Activated CD4-positive, alpha-beta memory T cell treated with anti-CD3 and anti-CD28 coated beads, Interleukin-2, amount 10 ng/mL, durations not matched to agents 7 days and 5 days (primary cell): ENCODE measurements at regions of chr5 and their contacts with region 1.

Region 1: GRCh38 chr5:172984243-172984953 is 827 bp downstream of the ATP6V0E1 start:
- DNase-seq: peak; percentile 81
- H3K4me3 Mint-ChIP-seq: peak overlapping the region; percentile 96
- H3K27ac Mint-ChIP-seq: peak overlapping the region; percentile 97
- H3K4me1 Mint-ChIP-seq: peaks cover 33% of the 10 kb centered on the region
- H3K27me3 Mint-ChIP-seq: no peaks in the 10 kb centered on the region

Region 2: DNA sequence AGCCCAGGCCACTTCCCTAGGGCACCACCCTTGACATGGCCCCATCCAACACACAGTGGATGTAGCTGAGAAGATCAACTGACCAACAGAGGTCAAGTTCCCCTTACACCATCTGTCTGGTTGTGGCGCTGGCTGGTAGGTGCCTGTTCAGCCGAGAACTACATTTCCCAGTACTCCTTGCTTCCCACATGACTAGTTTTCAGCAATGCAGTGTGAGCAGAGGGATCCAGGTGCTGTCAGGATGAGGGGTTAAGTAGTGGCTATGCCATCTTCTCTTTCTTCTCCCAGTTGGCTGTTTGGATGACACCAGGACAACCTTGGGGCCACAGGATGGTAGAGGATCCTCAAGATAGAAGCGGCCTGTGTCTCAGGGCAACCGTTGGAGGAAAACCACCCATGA is 481.4 kb before region 1 on chr5:
- CTCF ChIA-PET with region 1: no interaction called
- POLR2A ChIA-PET with region 1: no interaction called
- DNase-seq: peak; percentile 11
- H3K4me3 Mint-ChIP-seq: no peak overlapping the region
- H3K27ac Mint-ChIP-seq: no peak overlapping the region
- H3K4me1 Mint-ChIP-seq: no peaks in the 10 kb centered on the region
- H3K27me3 Mint-ChIP-seq: peaks cover 4% of the 10 kb centered on the region

Region 3: GRCh38 chr5:172688349-172689217 is 295.8 kb before region 1 on chr5:
- CTCF ChIA-PET with region 1: no interaction called
- POLR2A ChIA-PET with region 1: no interaction called
- DNase-seq: peak; percentile 49
- H3K4me3 Mint-ChIP-seq: no peak overlapping the region
- H3K27ac Mint-ChIP-seq: peak overlapping the region; percentile 61
- H3K4me1 Mint-ChIP-seq: peaks cover 34% of the 10 kb centered on the region
- H3K27me3 Mint-ChIP-seq: peaks cover 9% of the 10 kb centered on the region

Region 4: GRCh38 chr5:172958331-172959046 is 25.9 kb before region 1 on chr5:
- CTCF ChIA-PET with region 1: interaction called, 16 read pairs
- POLR2A ChIA-PET with region 1: interaction called, 66 read pairs
- DNase-seq: peak; percentile 72
- H3K4me3 Mint-ChIP-seq: peak overlapping the region; percentile 87
- H3K27ac Mint-ChIP-seq: peak overlapping the region; percentile 91
- H3K4me1 Mint-ChIP-seq: peaks cover 26% of the 10 kb centered on the region
- H3K27me3 Mint-ChIP-seq: peaks cover 8% of the 10 kb centered on the region

Region 5: GRCh38 chr5:172994405-172994804 is 10.0 kb after region 1 on chr5:
- CTCF ChIA-PET with region 1: interaction called, 10 read pairs
- POLR2A ChIA-PET with region 1: interaction called, 20 read pairs
- DNase-seq: no peak
- H3K4me3 Mint-ChIP-seq: no peak overlapping the region
- H3K27ac Mint-ChIP-seq: no peak overlapping the region
- H3K4me1 Mint-ChIP-seq: peaks cover 24% of the 10 kb centered on the region
- H3K27me3 Mint-ChIP-seq: no peaks in the 10 kb centered on the region

Region 6: GRCh38 chr5:173016621-173017047 is 32.2 kb after region 1 on chr5:
- CTCF ChIA-PET with region 1: no interaction called
- POLR2A ChIA-PET with region 1: interaction called, 10 read pairs
- DNase-seq: no peak
- H3K4me3 Mint-ChIP-seq: no peak overlapping the region
- H3K27ac Mint-ChIP-seq: no peak overlapping the region
- H3K4me1 Mint-ChIP-seq: peaks cover 19% of the 10 kb centered on the region
- H3K27me3 Mint-ChIP-seq: no peaks in the 10 kb centered on the region

Region 7: GRCh38 chr5:173057062-173057924 is 72.9 kb after region 1 on chr5:
- CTCF ChIA-PET with region 1: interaction called, 40 read pairs
- POLR2A ChIA-PET with region 1: interaction called, 60 read pairs
- DNase-seq: peak; percentile 99
- H3K4me3 Mint-ChIP-seq: peak overlapping the region; percentile 93
- H3K27ac Mint-ChIP-seq: peak overlapping the region; percentile 94
- H3K4me1 Mint-ChIP-seq: peaks cover 40% of the 10 kb centered on the region
- H3K27me3 Mint-ChIP-seq: no peaks in the 10 kb centered on the region

Region 8: GRCh38 chr5:173144200-173145176 is 160.1 kb after region 1 on chr5 and contains the start of gene BNIP1:
- CTCF ChIA-PET with region 1: interaction called, 42 read pairs
- POLR2A ChIA-PET with region 1: interaction called, 31 read pairs
- DNase-seq: peak; percentile 95
- H3K4me3 Mint-ChIP-seq: peak within 1 kb of the TSS; percentile 98
- H3K27ac Mint-ChIP-seq: peak within 1 kb of the TSS; percentile 92
- H3K4me1 Mint-ChIP-seq: peaks cover 17% of the 10 kb centered on the region
- H3K27me3 Mint-ChIP-seq: no peaks in the 10 kb centered on the region
- total RNA-seq, gene BNIP1: 13.2 to 13.3 TPM